ENCODE measurements at regions of chr2 and their contacts with region 1.

Region 1: DNA sequence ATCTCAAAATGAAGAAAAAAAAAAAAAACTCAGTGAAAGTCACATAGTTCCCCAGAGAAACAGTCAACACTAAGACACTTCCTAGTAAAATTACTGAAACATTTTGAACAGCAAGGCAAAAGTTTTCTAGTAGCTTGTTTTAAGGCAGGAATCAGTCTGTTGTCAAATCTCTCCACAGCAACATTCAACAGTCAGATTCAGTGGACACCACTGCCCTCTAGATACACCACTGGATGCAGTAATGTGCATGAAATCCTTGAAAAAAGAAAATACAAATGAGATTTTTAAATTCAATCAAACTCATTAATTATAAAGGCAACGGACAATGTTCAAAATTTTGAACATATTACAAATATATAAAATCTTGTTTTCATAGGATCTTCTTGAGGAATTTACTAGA is 46.4 kb downstream of the GRB14 start:
- DNase-seq: no peak
- H3K4me3 Mint-ChIP-seq: no peak overlapping the region
- H3K27ac Mint-ChIP-seq: no peak overlapping the region
- H3K4me1 Mint-ChIP-seq: no peaks in the 10 kb centered on the region
- H3K27me3 Mint-ChIP-seq: no peaks in the 10 kb centered on the region

Region 2: GRCh38 chr2:164934401-164935117 is 359.6 kb after region 1 on chr2:
- CTCF ChIA-PET with region 1: no interaction called
- intact Hi-C with region 1: loop called (anchors 5 kb)
- DNase-seq: no peak
- H3K4me3 Mint-ChIP-seq: no peak overlapping the region
- H3K27ac Mint-ChIP-seq: no peak overlapping the region
- H3K4me1 Mint-ChIP-seq: no peaks in the 10 kb centered on the region
- H3K27me3 Mint-ChIP-seq: peaks cover 2% of the 10 kb centered on the region

Region 3: DNA sequence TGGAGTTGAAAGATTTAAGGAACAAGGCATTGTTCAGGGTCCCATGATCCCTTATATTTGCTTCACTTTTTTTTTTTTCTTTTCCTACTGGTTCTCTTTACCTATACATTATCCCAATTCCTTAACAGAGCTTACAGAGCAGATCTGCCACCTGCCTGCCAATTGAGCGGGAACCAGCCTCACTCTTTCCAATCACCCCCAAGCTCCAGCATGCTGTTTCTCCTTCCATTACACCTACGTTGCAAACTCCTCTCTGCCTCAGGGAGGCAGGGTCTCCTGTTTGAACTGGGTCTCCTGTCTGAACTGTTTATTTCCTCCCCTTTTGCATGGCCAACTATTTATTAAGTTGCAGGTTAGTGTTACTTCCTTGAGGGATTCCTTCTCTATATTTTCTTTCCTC is 457.6 kb after region 1 on chr2:
- CTCF ChIA-PET with region 1: no interaction called
- intact Hi-C with region 1: no loop called
- DNase-seq: no peak
- H3K4me3 Mint-ChIP-seq: no peak overlapping the region
- H3K27ac Mint-ChIP-seq: no peak overlapping the region
- H3K4me1 Mint-ChIP-seq: no peaks in the 10 kb centered on the region
- H3K27me3 Mint-ChIP-seq: peaks cover 2% of the 10 kb centered on the region

Region 4: GRCh38 chr2:165499131-165499530 is 924.2 kb after region 1 on chr2:
- CTCF ChIA-PET with region 1: no interaction called
- intact Hi-C with region 1: no loop called
- DNase-seq: no peak
- H3K4me3 Mint-ChIP-seq: no peak overlapping the region
- H3K27ac Mint-ChIP-seq: no peak overlapping the region
- H3K4me1 Mint-ChIP-seq: no peaks in the 10 kb centered on the region
- H3K27me3 Mint-ChIP-seq: peaks cover 3% of the 10 kb centered on the region

Measured in activated naive CD4-positive, alpha-beta T cell treated with anti-CD3 and anti-CD28 coated beads for 36 hours (primary cell).